ENCODE measurements at regions of chr13 and their contacts with region 1.

Region 1: DNA sequence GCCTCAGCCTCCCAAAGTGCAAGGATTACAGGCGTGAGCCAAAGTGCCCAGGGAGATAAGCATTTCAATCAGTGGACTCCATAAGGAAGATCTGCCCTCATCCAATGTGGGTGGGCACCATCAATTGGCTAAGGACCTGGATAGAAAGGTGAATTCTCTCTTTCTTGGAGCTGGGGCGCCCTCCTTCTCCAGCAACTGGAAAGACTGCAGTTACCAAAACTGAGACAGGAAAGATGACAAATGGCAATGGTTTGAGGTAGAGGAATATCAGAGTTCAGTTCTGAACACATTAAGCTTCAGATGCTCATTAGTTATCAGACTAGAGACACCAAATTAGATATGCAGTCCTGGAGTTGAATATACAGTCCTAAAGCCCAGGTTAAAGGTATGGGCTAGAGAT is 10.5 kb upstream of the ELF1 start:
- DNase-seq: no peak
- H3K4me3 ChIP-seq: no peak overlapping the region
- CTCF ChIP-seq: no peak
- POLR2A ChIP-seq: no peak

Region 2: DNA sequence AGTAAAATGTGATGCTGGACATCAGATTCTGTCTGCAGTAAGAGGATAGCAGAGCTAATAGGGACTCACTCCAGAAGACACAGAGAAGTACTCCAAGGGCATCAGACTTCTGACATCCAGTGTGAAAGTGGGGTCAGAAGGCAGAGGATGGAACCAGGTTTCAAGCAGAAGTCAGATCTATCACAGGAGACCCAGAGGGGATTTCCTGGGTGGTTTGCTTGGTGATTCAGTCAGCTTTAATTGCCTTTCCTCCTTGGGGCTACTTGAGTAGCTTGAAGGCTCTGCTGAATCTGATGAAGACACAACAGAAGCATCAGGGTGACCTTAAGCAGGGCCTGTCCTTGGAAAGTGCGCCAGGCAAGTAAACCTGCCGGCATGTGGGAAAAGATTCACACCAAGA is 1073.6 kb before region 1 on chr13:
- intact Hi-C with region 1: no loop called
- DNase-seq: no peak
- H3K4me3 ChIP-seq: no peak overlapping the region
- CTCF ChIP-seq: no peak
- POLR2A ChIP-seq: no peak

Region 3: GRCh38 chr13:40981361-40981760 is 48.3 kb before region 1 on chr13:
- intact Hi-C with region 1: loop called (anchors 2 kb)
- DNase-seq: no peak
- H3K4me3 ChIP-seq: no peak overlapping the region
- CTCF ChIP-seq: no peak
- POLR2A ChIP-seq: no peak